Mammary epithelial cell (primary cell): ENCODE measurements at regions of chr4 and their contacts with region 1.

Region 1: GRCh38 chr4:98658287-98659105 is at the start of gene TSPAN5:
- DNase-seq: peak; percentile 80
- H3K4me3 ChIP-seq: peak within 1 kb of the TSS; percentile 65 to 89 (median 83)
- H3K27ac ChIP-seq: peak within 1 kb of the TSS; percentile 57
- H3K4me1 ChIP-seq: peaks cover 57% of the 10 kb centered on the region
- H3K27me3 ChIP-seq: no peaks in the 10 kb centered on the region
- CTCF ChIP-seq: no peak
- total RNA-seq, gene TSPAN5: 19.0 to 38.4 TPM

Region 2: GRCh38 chr4:98150092-98150761 is 508.3 kb before region 1 on chr4:
- CTCF ChIA-PET with region 1: no interaction called
- dilution Hi-C with region 1: no loop called
- in situ Hi-C with region 1: loop called in 1 of 2 experiments (anchors 25 kb)
- intact Hi-C with region 1: loop called (anchors 2 kb)
- DNase-seq: no peak
- H3K4me3 ChIP-seq: no peak overlapping the region
- H3K27ac ChIP-seq: no peak overlapping the region
- H3K4me1 ChIP-seq: no peaks in the 10 kb centered on the region
- H3K27me3 ChIP-seq: no peaks in the 10 kb centered on the region
- CTCF ChIP-seq: peak in 1 of 2 donors; percentile 14

Region 3: DNA sequence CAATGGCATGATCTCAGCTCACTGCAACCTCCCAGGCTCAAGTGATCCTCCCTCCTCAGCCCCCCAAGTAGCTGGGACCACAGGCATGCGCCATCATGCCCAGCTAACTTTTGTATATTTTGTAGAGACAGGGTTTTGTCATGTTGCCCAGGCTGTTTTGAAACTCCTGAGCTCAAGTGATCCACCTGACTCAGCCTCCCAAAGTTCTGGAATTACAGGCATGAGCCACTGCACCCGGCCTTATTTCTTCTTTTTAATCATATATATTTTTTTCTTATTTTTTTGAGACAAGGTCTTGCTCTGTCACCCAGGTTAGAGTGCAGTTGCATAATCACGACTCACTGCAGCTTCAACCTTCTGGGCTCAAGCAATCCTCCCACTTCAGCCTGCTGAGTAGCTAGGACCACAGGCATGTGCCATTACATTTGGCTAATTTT is 184.1 kb before region 1 on chr4:
- CTCF ChIA-PET with region 1: no interaction called
- dilution Hi-C with region 1: no loop called
- in situ Hi-C with region 1: loop called in 1 of 2 experiments (anchors 10 kb)
- intact Hi-C with region 1: no loop called
- DNase-seq: peak; percentile 76
- H3K4me3 ChIP-seq: no peak overlapping the region
- H3K27ac ChIP-seq: no peak overlapping the region
- H3K4me1 ChIP-seq: peaks cover 36% of the 10 kb centered on the region
- H3K27me3 ChIP-seq: no peaks in the 10 kb centered on the region
- CTCF ChIP-seq: no peak

Region 4: DNA sequence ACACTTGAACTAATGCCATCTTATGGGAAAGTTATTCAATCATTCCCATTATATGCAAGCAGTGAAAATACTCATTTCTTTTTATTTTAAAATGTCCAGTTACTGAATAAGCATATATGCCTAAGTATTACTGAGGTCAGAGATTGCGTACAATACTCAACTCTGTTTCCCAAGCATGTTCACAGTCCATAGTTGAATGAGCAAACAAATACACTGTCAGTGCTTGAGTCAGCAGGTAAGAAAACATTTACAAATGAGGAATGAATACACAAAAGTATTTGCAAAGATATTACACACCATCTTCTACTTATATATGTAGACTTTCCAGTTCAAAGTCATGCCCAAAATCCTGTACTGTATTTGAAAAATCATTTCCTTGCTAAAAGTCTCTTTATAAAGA is 74.2 kb before region 1 on chr4:
- CTCF ChIA-PET with region 1: no interaction called
- dilution Hi-C with region 1: no loop called
- in situ Hi-C with region 1: no loop called
- intact Hi-C with region 1: loop called (anchors 2 kb)
- DNase-seq: peak; percentile 37
- H3K4me3 ChIP-seq: no peak overlapping the region
- H3K27ac ChIP-seq: no peak overlapping the region
- H3K4me1 ChIP-seq: peaks cover 26% of the 10 kb centered on the region
- H3K27me3 ChIP-seq: no peaks in the 10 kb centered on the region
- CTCF ChIP-seq: no peak